Cardiac septum (tissue), 1 donor: ENCODE measurements at regions of chr19 and their contacts with region 1.

Region 1: DNA sequence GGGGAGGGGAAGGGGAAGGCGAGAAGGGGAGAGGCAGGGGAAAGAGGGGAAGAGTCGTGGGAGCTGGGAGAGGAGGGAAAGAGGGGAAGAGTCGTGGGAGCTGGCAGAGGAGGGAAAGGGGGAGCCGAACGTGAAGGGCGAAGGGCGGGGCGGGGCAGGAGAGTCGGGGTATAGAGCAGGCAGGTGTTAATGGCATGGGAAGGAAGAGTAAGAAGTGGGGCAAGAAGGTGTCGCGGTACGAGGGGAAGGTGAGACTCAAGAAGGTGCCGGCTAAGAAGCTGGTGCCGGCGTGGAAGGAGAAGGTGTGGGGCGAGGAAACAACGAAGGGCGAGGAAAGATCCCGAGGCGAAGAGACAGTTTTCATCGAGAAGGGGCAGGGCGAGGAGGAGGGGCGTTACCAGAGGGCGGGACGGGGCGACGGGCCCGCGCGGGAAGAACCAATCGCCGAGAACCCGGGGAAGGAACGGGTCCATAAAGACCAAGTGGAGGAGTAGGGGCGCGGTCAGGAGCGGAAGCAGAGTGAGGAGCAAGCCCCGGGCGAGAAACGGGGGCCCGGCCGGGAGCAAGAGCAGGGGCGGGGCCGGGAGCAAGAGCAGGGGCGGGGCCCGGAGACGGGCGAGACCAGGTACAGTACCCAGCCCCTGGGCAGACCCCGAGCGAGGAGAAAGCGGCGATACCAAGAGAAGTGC is 463 bp downstream of the CATSPERG start:
- DNase-seq: peak; percentile 97

Region 2: GRCh38 chr19:37906869-37907734 is 429.0 kb before region 1 on chr19 and contains the start of gene SIPA1L3:
- intact Hi-C with region 1: loop called (anchors 5 kb)
- DNase-seq: peak; percentile 97
- total RNA-seq, gene SIPA1L3: 14.0 TPM

Region 3: DNA sequence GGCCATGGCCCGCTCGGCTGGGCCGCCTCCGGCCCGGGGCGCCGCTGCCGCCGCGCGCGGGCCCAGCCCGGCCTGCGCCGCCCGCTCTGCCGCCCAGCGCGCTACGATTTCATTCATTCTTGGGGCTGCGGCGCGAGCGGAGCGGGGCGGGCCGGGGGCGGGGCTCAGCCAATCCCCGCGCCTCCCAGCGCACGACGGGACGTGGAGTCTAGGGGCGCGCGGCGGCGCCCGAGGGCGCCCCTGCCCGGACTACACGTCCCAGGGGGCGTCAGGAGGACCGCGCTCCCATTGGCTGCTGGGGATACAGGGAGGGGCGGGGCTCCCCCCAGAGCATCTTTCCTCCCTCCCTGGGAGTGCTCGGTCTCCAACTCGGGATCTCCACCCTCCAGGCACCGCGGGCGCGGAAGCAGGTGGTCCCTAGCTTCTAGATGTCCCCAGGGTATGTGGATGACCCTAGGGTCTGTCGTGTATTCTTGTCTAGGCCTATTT is 106.5 kb before region 1 on chr19:
- intact Hi-C with region 1: loop called (anchors 2 kb)
- DNase-seq: no peak

Region 4: GRCh38 chr19:38245826-38246498 is 90.1 kb before region 1 on chr19:
- intact Hi-C with region 1: loop called (anchors 1 kb)
- DNase-seq: no peak

Region 5: GRCh38 chr19:38374429-38375176 is 38.5 kb after region 1 on chr19 and contains the start of gene PSMD8:
- intact Hi-C with region 1: loop called (anchors 1 kb)
- DNase-seq: peak; percentile 100
- total RNA-seq, gene PSMD8: 283 TPM